ENCODE measurements at regions of chr3 and their contacts with region 1.

Region 1: DNA sequence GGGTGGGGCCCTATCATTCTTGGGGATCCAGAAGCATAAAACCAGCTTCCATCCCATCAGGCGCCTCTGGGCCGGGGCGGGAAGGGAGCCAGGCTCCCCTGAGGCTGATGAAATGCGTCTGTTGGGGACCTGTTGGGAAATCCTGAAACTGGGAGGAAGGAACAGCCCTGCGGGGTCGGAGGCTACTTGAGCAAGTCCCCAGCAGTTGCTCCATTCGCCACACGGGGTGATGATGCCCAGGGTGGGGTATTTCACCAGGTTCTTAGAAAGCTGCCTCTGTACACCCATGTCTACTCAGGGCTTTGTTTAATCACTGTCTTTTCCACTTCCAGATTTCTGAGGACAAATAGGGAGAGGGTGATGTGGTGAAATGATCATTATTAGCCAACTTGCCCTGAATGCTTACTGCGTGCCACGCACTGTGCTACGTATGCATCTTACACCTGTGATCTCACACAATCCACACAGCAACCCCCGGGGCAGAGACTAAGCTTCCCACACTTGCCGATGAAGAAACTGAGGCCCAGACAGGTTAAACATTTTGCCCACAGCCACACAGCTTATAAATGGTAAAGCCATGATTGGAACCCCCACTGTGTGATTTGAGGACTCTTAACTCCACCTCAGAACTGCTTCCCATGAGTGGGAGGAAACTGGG is 25.2 kb upstream of the TSEN2 start:
- DNase-seq: no peak
- H3K4me3 ChIP-seq: no peak overlapping the region
- CTCF ChIP-seq: no peak

Region 2: GRCh38 chr3:12400616-12401194 is 58.3 kb before region 1 on chr3:
- in situ Hi-C with region 1: loop called (anchors 5 kb)
- DNase-seq: peak; percentile 29
- H3K4me3 ChIP-seq: no peak overlapping the region
- CTCF ChIP-seq: no peak

Measured in astrocyte of the cerebellum (primary cell).